Activated CD4-positive, alpha-beta T cell treated with anti-CD3 and anti-CD28 coated beads for 36 hours (primary cell): ENCODE measurements at regions of chr17 and their contacts with region 1.

Region 1: GRCh38 chr17:48492401-48493298 is 38.2 kb downstream of the HOXB1 start:
- DNase-seq: peak; percentile 80
- ATAC-seq: peak; percentile 91
- H3K4me3 Mint-ChIP-seq: peak overlapping the region; percentile 44
- H3K27ac Mint-ChIP-seq: no peak overlapping the region
- H3K4me1 Mint-ChIP-seq: peaks cover 13% of the 10 kb centered on the region
- H3K27me3 Mint-ChIP-seq: peaks cover 11% of the 10 kb centered on the region

Region 2: GRCh38 chr17:48295362-48296288 is 197.0 kb before region 1 on chr17:
- CTCF ChIA-PET with region 1: no interaction called
- POLR2A ChIA-PET with region 1: interaction called, 11 read pairs
- intact Hi-C with region 1: no loop called
- DNase-seq: no peak
- ATAC-seq: peak; percentile 68
- H3K4me3 Mint-ChIP-seq: peak overlapping the region; percentile 73
- H3K27ac Mint-ChIP-seq: peak overlapping the region; percentile 93
- H3K4me1 Mint-ChIP-seq: peaks cover 67% of the 10 kb centered on the region
- H3K27me3 Mint-ChIP-seq: no peaks in the 10 kb centered on the region

Region 3: DNA sequence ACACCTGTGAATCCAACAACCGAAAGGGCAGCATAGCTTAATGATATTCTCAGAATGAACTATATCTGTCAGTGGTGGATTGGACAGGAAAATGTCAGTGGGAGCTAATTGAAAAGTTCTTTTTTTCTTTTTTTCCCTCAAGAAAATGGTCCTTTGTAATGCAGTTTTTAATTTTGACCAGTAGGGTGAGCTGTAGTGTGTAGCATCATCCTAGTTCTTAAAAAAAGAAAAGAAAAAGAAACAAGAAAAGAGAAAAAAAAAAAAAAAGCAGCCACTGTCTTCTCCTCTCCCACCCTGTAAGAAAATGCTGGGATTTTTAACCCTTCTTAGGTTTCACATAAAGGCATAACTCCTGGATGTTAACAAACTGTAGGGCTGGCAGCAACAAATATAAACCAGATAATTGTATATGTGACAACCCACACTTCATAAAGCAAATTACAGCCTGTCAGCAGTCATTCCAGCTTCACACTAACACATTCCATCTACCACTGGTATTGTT is 140.8 kb before region 1 on chr17:
- CTCF ChIA-PET with region 1: interaction called, 14 read pairs
- POLR2A ChIA-PET with region 1: no interaction called
- intact Hi-C with region 1: no loop called
- DNase-seq: no peak
- ATAC-seq: no peak
- H3K4me3 Mint-ChIP-seq: no peak overlapping the region
- H3K27ac Mint-ChIP-seq: no peak overlapping the region
- H3K4me1 Mint-ChIP-seq: peaks cover 11% of the 10 kb centered on the region
- H3K27me3 Mint-ChIP-seq: no peaks in the 10 kb centered on the region

Region 4: GRCh38 chr17:48503748-48504147 is 11.1 kb after region 1 on chr17:
- CTCF ChIA-PET with region 1: interaction called, 11 read pairs
- POLR2A ChIA-PET with region 1: no interaction called
- intact Hi-C with region 1: no loop called
- DNase-seq: no peak
- ATAC-seq: no peak
- H3K4me3 Mint-ChIP-seq: no peak overlapping the region
- H3K27ac Mint-ChIP-seq: no peak overlapping the region
- H3K4me1 Mint-ChIP-seq: peaks cover 10% of the 10 kb centered on the region
- H3K27me3 Mint-ChIP-seq: peaks cover 7% of the 10 kb centered on the region

Region 5: GRCh38 chr17:48555258-48556228 is 62.9 kb after region 1 on chr17:
- CTCF ChIA-PET with region 1: interaction called, 4 read pairs
- POLR2A ChIA-PET with region 1: no interaction called
- intact Hi-C with region 1: loop called in 1 of 2 experiments (anchors 2 kb)
- DNase-seq: peak; percentile 23
- ATAC-seq: peak; percentile 55
- H3K4me3 Mint-ChIP-seq: peak overlapping the region; percentile 53
- H3K27ac Mint-ChIP-seq: no peak overlapping the region
- H3K4me1 Mint-ChIP-seq: peaks cover 2% of the 10 kb centered on the region
- H3K27me3 Mint-ChIP-seq: peaks cover 30% of the 10 kb centered on the region

Region 6: DNA sequence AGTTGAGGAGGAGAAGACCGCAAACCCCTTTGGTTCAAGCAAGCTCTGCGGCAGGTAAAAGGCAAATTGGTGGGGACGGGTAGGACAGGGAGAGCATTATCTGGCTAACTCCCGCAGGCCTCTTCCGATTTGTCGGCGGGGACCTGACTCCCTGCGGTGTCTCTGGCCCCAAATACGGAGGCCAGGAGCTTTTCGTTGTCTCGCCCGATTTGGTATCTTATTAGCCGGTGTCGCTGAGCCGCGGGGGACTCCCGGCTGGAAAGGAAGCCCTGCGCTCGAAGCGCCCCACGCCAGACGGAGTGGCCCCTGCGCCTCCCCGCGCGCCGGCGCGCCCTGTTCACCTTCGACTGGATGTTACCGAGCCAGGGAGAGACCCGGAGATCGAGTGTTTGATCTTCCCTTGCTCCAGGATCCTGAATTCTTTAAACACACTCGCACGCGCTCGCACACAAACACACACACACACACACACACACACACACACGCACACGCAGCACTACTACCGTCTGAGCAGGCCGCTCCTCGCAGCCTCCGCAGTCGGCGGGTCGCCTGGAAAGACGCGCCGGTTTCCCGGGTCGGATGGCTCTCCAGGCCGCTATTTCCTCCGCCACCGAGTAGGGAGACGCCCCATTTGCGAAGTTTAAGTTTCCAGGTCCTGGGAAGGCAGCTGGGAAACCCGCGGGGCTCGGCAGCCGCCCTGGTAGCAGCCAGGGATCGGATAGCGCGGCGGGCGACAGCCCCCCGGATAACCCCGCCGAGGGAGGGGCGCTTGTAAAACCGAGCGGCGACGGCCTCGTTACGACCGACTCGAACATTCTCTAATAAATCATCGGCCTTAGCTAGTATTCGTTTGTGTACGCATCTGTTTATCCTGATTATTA is 226.4 kb after region 1 on chr17:
- CTCF ChIA-PET with region 1: no interaction called
- POLR2A ChIA-PET with region 1: no interaction called
- intact Hi-C with region 1: no loop called
- DNase-seq: peak; percentile 34
- ATAC-seq: no peak
- H3K4me3 Mint-ChIP-seq: peak overlapping the region; percentile 40
- H3K27ac Mint-ChIP-seq: no peak overlapping the region
- H3K4me1 Mint-ChIP-seq: peaks cover 25% of the 10 kb centered on the region
- H3K27me3 Mint-ChIP-seq: peaks cover 75% of the 10 kb centered on the region